CD8-positive, alpha-beta T cell (primary cell): ENCODE measurements at regions of chr12 and their contacts with region 1.

Region 1: GRCh38 chr12:21677622-21678277 is 20.1 kb upstream of the LDHB start:
- DNase-seq: peak in 5 of 9 experiments; percentile 10 to 65 (median 28)
- ATAC-seq: peak; percentile 39
- H3K4me3 ChIP-seq: peak overlapping the region; percentile 13 to 47
- H3K4me3 Mint-ChIP-seq: peak overlapping the region; percentile 76
- H3K27ac ChIP-seq: peak overlapping the region; percentile 17 to 32
- H3K27ac Mint-ChIP-seq: peak overlapping the region; percentile 91
- H3K4me1 ChIP-seq: peaks cover 54% of the 10 kb centered on the region
- H3K4me1 Mint-ChIP-seq: peaks cover 52% of the 10 kb centered on the region
- H3K27me3 ChIP-seq: no peaks in the 10 kb centered on the region
- H3K27me3 Mint-ChIP-seq: no peaks in the 10 kb centered on the region
- CTCF ChIP-seq: no peak

Region 2: DNA sequence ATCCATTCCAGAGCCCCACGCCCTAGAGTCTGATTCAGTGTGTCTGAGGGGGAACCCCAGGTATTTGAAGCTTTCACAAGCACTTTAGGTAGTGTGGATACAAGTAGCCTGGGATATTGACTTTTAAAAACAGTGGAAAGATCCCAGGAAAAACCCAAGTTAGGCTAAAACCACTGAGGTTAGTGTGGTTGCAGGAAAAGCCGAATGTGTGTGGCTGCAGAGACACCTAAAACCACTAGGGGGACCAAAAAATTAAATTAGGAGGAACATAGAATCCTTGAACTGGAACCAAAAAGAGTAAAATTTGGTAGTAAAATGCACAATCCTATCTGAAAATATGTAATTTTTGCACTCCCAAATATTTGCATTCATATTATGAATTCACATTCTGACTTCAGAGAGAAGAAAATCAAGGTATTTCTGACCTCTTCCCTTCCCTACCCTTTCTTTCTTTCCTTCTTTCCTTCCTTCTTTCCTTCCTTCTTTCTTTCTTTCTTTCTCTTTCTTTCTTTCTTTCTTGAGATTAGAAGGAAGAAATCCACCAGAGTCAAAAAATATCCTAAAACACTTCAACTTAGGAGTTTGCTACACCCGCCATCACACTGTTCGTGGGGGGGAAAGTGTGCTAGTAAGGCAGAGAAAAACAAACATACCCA is 380.9 kb before region 1 on chr12:
- CTCF ChIA-PET with region 1: interaction called, 3 read pairs
- POLR2A ChIA-PET with region 1: no interaction called
- intact Hi-C with region 1: loop called (anchors 1 to 5 kb)
- DNase-seq: peak in 2 of 9 experiments; percentile 10 to 29
- ATAC-seq: no peak
- H3K4me3 ChIP-seq: no peak overlapping the region
- H3K4me3 Mint-ChIP-seq: no peak overlapping the region
- H3K27ac ChIP-seq: no peak overlapping the region
- H3K27ac Mint-ChIP-seq: no peak overlapping the region
- H3K4me1 ChIP-seq: no peaks in the 10 kb centered on the region
- H3K4me1 Mint-ChIP-seq: peaks cover 2% of the 10 kb centered on the region
- H3K27me3 ChIP-seq: no peaks in the 10 kb centered on the region
- H3K27me3 Mint-ChIP-seq: peaks cover 3% of the 10 kb centered on the region
- CTCF ChIP-seq: peak; percentile 71

Region 3: DNA sequence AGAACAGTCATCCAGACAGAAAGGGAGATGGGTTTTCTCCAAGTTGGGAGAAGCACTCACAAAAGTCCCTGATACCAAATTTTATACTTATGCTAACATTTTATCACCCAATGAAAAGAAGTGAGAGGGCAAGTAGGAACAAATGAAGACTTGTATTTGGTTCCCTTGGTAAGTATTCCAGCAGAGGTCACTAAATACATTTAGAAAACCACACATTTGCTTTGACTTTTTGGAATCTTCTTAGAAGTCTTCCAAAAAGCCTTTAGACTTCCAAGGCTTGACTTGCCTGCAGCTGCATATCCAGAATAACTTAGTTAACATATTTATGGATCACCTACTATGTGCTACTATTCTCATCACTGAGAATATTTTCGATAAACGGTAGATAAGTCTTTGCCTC is 70.0 kb before region 1 on chr12:
- CTCF ChIA-PET with region 1: interaction called, 138 read pairs
- POLR2A ChIA-PET with region 1: interaction called, 9 read pairs
- intact Hi-C with region 1: loop called (anchors 1 kb)
- DNase-seq: peak in 2 of 9 experiments; percentile 38 to 57
- ATAC-seq: no peak
- H3K4me3 ChIP-seq: no peak overlapping the region
- H3K4me3 Mint-ChIP-seq: no peak overlapping the region
- H3K27ac ChIP-seq: no peak overlapping the region
- H3K27ac Mint-ChIP-seq: no peak overlapping the region
- H3K4me1 ChIP-seq: peaks cover 10% of the 10 kb centered on the region
- H3K4me1 Mint-ChIP-seq: peaks cover 10% of the 10 kb centered on the region
- H3K27me3 ChIP-seq: no peaks in the 10 kb centered on the region
- H3K27me3 Mint-ChIP-seq: no peaks in the 10 kb centered on the region
- CTCF ChIP-seq: peak; percentile 18

Region 4: GRCh38 chr12:21650833-21651396 is 26.8 kb before region 1 on chr12:
- CTCF ChIA-PET with region 1: interaction called, 26 read pairs
- POLR2A ChIA-PET with region 1: interaction called, 75 read pairs
- intact Hi-C with region 1: loop called in 1 of 2 experiments (anchors 2 kb)
- DNase-seq: no peak
- ATAC-seq: no peak
- H3K4me3 ChIP-seq: no peak overlapping the region
- H3K4me3 Mint-ChIP-seq: peak overlapping the region; percentile 24
- H3K27ac ChIP-seq: no peak overlapping the region
- H3K27ac Mint-ChIP-seq: peak overlapping the region; percentile 52
- H3K4me1 ChIP-seq: peaks cover 82% of the 10 kb centered on the region
- H3K4me1 Mint-ChIP-seq: peaks cover 93% of the 10 kb centered on the region
- H3K27me3 ChIP-seq: no peaks in the 10 kb centered on the region
- H3K27me3 Mint-ChIP-seq: no peaks in the 10 kb centered on the region
- CTCF ChIP-seq: no peak

Region 5: GRCh38 chr12:21697904-21698630 is 20.3 kb after region 1 on chr12:
- CTCF ChIA-PET with region 1: interaction called, 45 read pairs
- POLR2A ChIA-PET with region 1: no interaction called
- intact Hi-C with region 1: no loop called
- DNase-seq: peak in 2 of 9 experiments; percentile 56 to 65
- ATAC-seq: no peak
- H3K4me3 ChIP-seq: no peak overlapping the region
- H3K4me3 Mint-ChIP-seq: no peak overlapping the region
- H3K27ac ChIP-seq: no peak overlapping the region
- H3K27ac Mint-ChIP-seq: no peak overlapping the region
- H3K4me1 ChIP-seq: no peaks in the 10 kb centered on the region
- H3K4me1 Mint-ChIP-seq: peaks cover 9% of the 10 kb centered on the region
- H3K27me3 ChIP-seq: no peaks in the 10 kb centered on the region
- H3K27me3 Mint-ChIP-seq: no peaks in the 10 kb centered on the region
- CTCF ChIP-seq: peak; percentile 85

Region 6: DNA sequence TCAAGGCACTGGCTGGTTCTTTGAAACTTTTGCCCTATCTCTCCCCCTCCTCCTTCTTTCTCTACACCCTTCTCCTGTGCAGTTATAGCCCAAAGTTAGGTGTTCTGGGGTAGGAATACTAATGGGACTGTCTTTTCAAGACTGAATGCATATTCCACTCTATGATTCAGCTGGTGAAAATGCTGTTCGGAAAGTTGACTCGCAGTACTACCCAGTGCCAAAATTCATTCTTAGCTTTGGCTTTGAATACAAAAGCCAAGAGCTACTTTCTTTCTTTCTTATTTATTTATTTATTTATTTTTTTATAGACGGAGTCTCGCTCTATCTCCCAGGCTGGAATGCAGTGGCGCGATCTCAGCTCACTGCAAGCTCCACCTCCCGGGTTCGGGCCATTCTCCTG is 1196.4 kb after region 1 on chr12:
- CTCF ChIA-PET with region 1: no interaction called
- POLR2A ChIA-PET with region 1: no interaction called
- intact Hi-C with region 1: no loop called
- DNase-seq: no peak
- ATAC-seq: no peak
- H3K4me3 ChIP-seq: no peak overlapping the region
- H3K4me3 Mint-ChIP-seq: no peak overlapping the region
- H3K27ac ChIP-seq: no peak overlapping the region
- H3K27ac Mint-ChIP-seq: no peak overlapping the region
- H3K4me1 ChIP-seq: no peaks in the 10 kb centered on the region
- H3K4me1 Mint-ChIP-seq: no peaks in the 10 kb centered on the region
- H3K27me3 ChIP-seq: no peaks in the 10 kb centered on the region
- H3K27me3 Mint-ChIP-seq: peaks cover 3% of the 10 kb centered on the region
- CTCF ChIP-seq: no peak